GM12878 (cell line): ENCODE measurements at regions of chr16 and their contacts with region 1.

Region 1: GRCh38 chr16:7602291-7602950 is 269.8 kb downstream of the RBFOX1 start:
- DNase-seq: no peak
- ATAC-seq: no peak
- H3K4me3 ChIP-seq: no peak overlapping the region
- H3K27ac ChIP-seq: no peak overlapping the region
- H3K4me1 ChIP-seq: no peaks in the 10 kb centered on the region
- H3K27me3 ChIP-seq: no peaks in the 10 kb centered on the region
- CTCF ChIP-seq: no peak
- EP300 ChIP-seq: no peak
- POLR2A ChIP-seq: no peak
- RAD21 ChIP-seq: no peak

Region 2: DNA sequence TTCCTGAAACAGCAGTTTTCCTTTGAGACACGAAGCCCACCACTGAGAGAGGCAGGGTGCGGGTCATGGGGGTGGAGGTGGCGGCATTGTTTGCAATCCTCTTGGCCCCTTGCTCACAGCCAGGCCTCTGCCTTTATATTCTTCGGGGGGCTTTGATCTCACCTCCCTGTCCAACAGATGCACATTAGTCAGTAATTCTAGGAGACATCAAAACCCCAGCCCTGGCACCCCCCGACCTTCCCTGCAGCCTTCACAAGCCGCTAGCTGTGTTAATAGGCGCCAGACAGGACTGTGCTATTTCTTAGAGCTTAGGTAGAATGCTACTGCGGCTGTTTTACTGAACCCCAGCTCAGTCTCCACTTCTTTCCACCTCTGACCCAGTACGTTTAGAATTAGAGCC is 57.2 kb before region 1 on chr16:
- CTCF ChIA-PET with region 1: no interaction called
- POLR2A ChIA-PET with region 1: no interaction called
- RAD21 ChIA-PET with region 1: no interaction called
- SMC1A ChIA-PET with region 1: no interaction called
- in situ Hi-C with region 1: loop called (anchors 10 kb)
- intact Hi-C with region 1: no loop called
- DNase-seq: no peak
- ATAC-seq: no peak
- H3K4me3 ChIP-seq: no peak overlapping the region
- H3K27ac ChIP-seq: no peak overlapping the region
- H3K4me1 ChIP-seq: no peaks in the 10 kb centered on the region
- H3K27me3 ChIP-seq: no peaks in the 10 kb centered on the region
- CTCF ChIP-seq: no peak
- EP300 ChIP-seq: no peak
- POLR2A ChIP-seq: no peak
- RAD21 ChIP-seq: no peak

Region 3: DNA sequence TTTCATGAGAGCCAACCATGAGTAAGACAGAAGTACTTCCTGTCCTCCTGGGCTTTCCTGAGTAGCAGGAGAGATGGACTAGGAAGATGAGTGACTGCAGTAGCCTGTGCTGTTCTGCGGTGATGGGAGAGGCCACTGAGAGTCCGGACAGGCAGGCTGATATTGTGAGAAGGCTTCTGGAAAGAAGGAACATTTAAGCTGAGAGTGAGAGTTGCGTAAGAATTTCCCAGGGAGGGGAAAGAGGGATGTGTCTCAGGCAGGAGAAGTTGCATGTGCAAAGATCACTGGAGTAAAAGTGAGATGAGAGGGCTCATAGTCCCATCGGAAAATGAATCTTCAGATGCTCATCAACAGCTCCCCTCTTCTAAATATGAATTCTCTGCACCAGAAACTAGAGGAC is 11.5 kb before region 1 on chr16:
- CTCF ChIA-PET with region 1: no interaction called
- POLR2A ChIA-PET with region 1: no interaction called
- RAD21 ChIA-PET with region 1: no interaction called
- SMC1A ChIA-PET with region 1: no interaction called
- in situ Hi-C with region 1: no loop called
- intact Hi-C with region 1: no loop called
- DNase-seq: no peak
- ATAC-seq: no peak
- H3K4me3 ChIP-seq: no peak overlapping the region
- H3K27ac ChIP-seq: no peak overlapping the region
- H3K4me1 ChIP-seq: no peaks in the 10 kb centered on the region
- H3K27me3 ChIP-seq: no peaks in the 10 kb centered on the region
- CTCF ChIP-seq: no peak
- EP300 ChIP-seq: no peak
- POLR2A ChIP-seq: no peak
- RAD21 ChIP-seq: no peak